ENCODE measurements at regions of chr2 and their contacts with region 1.

Region 1: DNA sequence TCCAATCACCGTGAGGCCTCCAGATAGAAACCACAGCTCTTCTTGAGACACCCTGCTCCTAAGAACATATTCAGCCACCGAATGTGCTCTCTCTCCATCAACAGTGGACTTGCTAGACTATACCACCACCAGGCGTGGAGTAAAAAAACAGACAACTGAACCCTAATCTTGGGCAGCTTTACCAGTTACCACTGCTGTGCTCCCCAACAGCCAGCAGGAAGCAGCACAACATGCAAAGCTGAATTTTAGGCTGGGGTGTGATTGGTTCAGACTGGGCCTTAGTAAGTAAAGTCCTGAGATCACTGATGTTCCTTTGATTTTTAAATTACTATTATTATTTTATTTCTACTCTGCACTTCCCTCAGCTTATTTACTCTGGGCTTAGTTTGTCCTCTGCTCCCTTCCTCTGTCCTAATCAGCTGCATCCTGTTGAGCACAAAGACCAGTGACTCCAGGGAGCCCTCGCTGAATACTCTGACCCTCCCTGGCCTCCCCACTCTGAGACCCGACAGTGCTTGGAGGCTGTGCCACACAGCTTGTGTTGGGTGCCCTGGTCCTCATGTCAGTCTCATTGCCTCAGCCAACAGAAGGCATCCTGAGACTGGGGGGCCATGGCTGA is 21.9 kb downstream of the MRPL35 start:
- DNase-seq: peak in 1 of 3 donors; percentile 55
- ATAC-seq: peak in 1 of 2 donors; percentile 44
- H3K4me3 ChIP-seq: no peak overlapping the region
- H3K27ac ChIP-seq: no peak overlapping the region
- H3K4me1 ChIP-seq: peaks cover 26% of the 10 kb centered on the region
- H3K27me3 ChIP-seq: no peaks in the 10 kb centered on the region

Region 2: DNA sequence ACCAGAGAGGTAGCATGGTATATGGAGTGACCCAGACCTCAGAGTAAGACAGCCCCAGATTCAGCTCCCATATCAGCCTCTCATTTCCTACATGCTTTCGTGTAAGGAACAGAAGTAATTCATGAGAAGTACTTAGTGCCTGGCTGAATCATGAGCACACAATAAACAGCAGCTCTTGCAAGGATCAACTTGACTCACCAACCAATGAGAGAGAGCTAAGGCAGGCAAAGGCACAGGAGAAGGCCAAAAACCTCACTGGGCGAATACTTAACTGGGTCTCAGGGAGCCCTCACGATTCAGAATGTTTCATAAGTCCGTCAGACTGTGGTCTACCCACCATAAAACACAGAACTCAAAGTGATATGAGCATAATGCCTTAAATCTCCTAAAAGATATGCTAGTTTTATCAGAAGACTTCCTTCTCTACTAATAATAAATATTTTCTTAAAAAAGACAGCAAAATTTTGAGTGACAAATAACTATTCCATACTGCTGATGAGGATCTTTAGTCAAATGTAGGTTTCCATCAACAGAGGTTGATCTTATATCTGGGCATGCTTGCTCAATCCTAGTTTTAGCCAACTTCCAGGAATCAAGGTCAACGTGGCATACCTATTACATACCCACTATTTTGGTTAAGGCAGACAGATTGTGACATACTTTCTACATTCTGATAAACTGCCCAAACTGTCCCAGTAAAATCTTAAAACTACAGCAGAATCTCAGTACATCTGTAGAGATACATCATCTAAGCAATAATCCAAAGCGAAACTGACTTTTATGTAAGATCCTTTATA is 60.8 kb before region 1 on chr2:
- intact Hi-C with region 1: no loop called
- DNase-seq: no peak
- ATAC-seq: no peak
- H3K4me3 ChIP-seq: no peak overlapping the region
- H3K27ac ChIP-seq: no peak overlapping the region
- H3K4me1 ChIP-seq: no peaks in the 10 kb centered on the region
- H3K27me3 ChIP-seq: no peaks in the 10 kb centered on the region

Region 3: DNA sequence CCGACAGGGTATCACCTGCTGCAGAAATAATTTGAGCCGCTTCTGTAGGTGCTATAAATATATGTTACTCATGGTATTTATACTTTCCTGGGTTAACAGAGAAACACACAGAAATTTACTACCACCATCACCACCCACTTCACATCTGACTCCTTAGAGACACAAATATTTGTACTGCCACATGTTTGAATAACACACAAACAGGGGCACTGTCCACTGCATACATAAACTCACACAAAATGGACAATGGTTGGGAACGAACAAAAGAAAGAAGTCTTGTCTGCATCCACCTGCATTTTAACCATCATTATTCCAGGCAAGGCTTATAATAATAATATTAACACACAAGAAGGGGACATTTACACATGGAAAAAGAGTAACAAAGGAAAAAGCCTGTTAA is 49.9 kb before region 1 on chr2:
- intact Hi-C with region 1: no loop called
- DNase-seq: no peak
- ATAC-seq: no peak
- H3K4me3 ChIP-seq: no peak overlapping the region
- H3K27ac ChIP-seq: no peak overlapping the region
- H3K4me1 ChIP-seq: no peaks in the 10 kb centered on the region
- H3K27me3 ChIP-seq: no peaks in the 10 kb centered on the region

Region 4: GRCh38 chr2:86298411-86299379 is 77.5 kb after region 1 on chr2:
- intact Hi-C with region 1: loop called in 2 of 4 experiments (anchors 5 to 10 kb)
- DNase-seq: no peak
- ATAC-seq: peak; percentile 59 to 69
- H3K4me3 ChIP-seq: no peak overlapping the region
- H3K27ac ChIP-seq: no peak overlapping the region
- H3K4me1 ChIP-seq: peaks cover 14% of the 10 kb centered on the region
- H3K27me3 ChIP-seq: no peaks in the 10 kb centered on the region

Region 5: DNA sequence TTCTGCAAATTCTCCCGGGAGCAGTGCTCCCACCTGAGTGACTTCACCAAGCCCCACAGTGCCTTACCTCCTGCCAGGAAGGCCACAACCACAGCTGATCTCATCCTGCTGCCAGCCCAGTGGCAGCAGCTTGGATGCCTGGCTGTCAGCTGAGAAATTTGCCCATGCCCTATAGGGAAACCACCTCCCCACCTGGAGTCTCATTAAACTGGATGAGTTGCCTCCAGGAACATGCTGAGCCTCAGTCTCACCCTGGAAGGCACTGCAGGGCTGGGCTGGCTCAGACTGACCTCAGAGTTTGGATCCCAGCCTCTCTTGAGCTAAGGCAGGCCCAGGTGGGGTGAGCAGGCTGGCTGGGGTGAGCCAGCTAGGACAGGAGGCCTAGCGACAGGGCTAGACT is 93.0 kb after region 1 on chr2:
- intact Hi-C with region 1: no loop called
- DNase-seq: no peak
- ATAC-seq: no peak
- H3K4me3 ChIP-seq: no peak overlapping the region
- H3K27ac ChIP-seq: no peak overlapping the region
- H3K4me1 ChIP-seq: peaks cover 4% of the 10 kb centered on the region
- H3K27me3 ChIP-seq: no peaks in the 10 kb centered on the region

Region 6: DNA sequence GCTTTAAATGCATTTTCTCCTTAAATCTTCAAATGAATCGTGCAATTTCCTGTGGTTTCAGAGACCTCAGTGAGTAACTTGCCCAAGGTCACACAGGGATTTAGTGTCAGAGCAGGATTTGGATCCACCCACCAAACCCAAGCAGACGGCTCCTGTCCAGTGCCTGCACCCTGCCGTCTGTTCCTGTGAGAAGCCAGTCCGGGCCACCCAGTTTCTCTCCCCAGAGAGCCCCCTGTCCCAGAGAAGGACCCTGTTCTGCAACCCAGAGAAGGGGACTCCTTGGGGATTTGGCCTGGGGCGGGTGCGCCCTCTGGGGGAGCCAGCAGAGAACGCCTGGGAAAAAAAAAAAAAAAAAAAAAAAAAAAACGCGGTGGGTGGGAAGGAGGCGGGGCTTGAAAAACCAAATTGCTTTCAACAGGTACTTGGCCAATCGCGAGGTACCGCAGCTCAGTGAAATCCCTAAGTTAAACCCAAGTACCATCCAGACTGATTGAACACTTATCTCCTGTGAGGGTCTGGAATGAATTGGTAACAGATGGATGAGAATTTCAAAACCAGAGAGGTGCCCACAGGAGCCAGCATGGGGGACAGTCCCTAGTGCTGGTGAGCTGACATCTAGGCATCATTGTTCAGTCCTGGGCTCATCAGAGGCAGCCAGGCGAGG is 147.1 kb after region 1 on chr2:
- intact Hi-C with region 1: loop called (anchors 2 to 10 kb)
- DNase-seq: peak; percentile 34 to 71 (median 71)
- ATAC-seq: peak; percentile 49 to 60
- H3K4me3 ChIP-seq: no peak overlapping the region
- H3K27ac ChIP-seq: no peak overlapping the region
- H3K4me1 ChIP-seq: no peaks in the 10 kb centered on the region
- H3K27me3 ChIP-seq: no peaks in the 10 kb centered on the region

Region 7: GRCh38 chr2:86440631-86441391 is 219.6 kb after region 1 on chr2 and contains the start of gene KDM3A:
- intact Hi-C with region 1: loop called in 1 of 4 experiments (anchors 10 kb)
- DNase-seq: peak; percentile 100
- ATAC-seq: peak; percentile 96 to 97
- H3K4me3 ChIP-seq: peak within 1 kb of the TSS; percentile 99
- H3K27ac ChIP-seq: peak within 1 kb of the TSS; percentile 100
- H3K4me1 ChIP-seq: peaks cover 5% of the 10 kb centered on the region
- H3K27me3 ChIP-seq: no peaks in the 10 kb centered on the region
- total RNA-seq, gene KDM3A: 41.3 to 54.3 (median 47.1) TPM

Measured in right cardiac atrium (tissue), 5 donors.